ENCODE measurements at regions of chr4 and their contacts with region 1.

Region 1: GRCh38 chr4:169612871-169613859 is 782 bp upstream of the NEK1 start:
- DNase-seq: peak; percentile 84
- H3K4me3 Mint-ChIP-seq: peak overlapping the region; percentile 86
- H3K27ac Mint-ChIP-seq: peak overlapping the region; percentile 94
- H3K4me1 Mint-ChIP-seq: peaks cover 53% of the 10 kb centered on the region
- H3K27me3 Mint-ChIP-seq: no peaks in the 10 kb centered on the region

Region 2: GRCh38 chr4:169010125-169011023 is 602.8 kb before region 1 on chr4 and contains the start of gene CBR4:
- CTCF ChIA-PET with region 1: no interaction called
- POLR2A ChIA-PET with region 1: no interaction called
- intact Hi-C with region 1: loop called (anchors 2 kb)
- DNase-seq: peak; percentile 97
- H3K4me3 Mint-ChIP-seq: peak within 1 kb of the TSS; percentile 92
- H3K27ac Mint-ChIP-seq: peak within 1 kb of the TSS; percentile 86
- H3K4me1 Mint-ChIP-seq: peaks cover 20% of the 10 kb centered on the region
- H3K27me3 Mint-ChIP-seq: no peaks in the 10 kb centered on the region
- total RNA-seq, gene CBR4: 18.0 to 19.7 TPM

Region 3: DNA sequence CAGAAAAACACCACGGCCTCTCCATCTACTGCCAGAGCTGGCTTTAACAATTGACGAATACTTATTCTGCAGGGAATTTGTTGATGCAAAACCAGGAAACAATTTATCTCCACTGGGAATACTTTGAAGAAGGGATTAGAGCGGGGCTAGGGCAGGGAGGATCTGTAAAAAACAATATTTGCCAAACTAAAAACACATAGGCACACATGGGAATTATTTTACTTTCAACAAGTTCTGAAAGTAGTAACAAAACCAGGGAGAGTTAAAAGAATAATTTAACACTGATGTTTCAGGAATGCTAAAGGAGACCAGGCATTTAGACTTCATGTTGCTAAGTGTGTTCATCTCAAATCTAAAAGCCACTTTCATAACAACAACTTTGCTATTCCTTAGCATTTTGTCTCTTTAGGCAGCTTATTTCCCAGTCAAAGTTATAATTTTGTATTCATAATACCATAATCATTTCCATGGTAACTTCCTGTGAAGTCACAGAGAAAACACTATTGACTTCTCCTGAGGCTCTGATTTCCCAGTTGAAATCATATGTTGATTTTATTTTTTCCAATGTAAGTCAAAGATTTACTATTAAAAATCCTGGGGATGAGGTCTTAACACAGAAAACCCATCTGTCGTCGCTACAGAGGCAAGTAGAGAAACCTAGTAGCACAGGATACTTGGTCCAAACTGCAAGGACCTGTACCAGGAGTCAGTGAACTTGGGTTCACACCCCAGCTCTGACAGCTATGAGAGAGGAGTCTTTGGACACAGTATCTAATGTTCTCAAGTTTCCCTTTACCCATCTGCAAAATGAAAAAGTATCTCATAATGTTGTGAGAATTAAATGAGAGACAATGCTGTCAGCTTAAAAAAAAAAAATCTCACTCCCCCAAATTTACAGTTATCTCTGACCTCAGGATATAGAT is 411.7 kb before region 1 on chr4:
- CTCF ChIA-PET with region 1: no interaction called
- POLR2A ChIA-PET with region 1: no interaction called
- intact Hi-C with region 1: no loop called
- DNase-seq: no peak
- H3K4me3 Mint-ChIP-seq: no peak overlapping the region
- H3K27ac Mint-ChIP-seq: no peak overlapping the region
- H3K4me1 Mint-ChIP-seq: no peaks in the 10 kb centered on the region
- H3K27me3 Mint-ChIP-seq: no peaks in the 10 kb centered on the region

Region 4: DNA sequence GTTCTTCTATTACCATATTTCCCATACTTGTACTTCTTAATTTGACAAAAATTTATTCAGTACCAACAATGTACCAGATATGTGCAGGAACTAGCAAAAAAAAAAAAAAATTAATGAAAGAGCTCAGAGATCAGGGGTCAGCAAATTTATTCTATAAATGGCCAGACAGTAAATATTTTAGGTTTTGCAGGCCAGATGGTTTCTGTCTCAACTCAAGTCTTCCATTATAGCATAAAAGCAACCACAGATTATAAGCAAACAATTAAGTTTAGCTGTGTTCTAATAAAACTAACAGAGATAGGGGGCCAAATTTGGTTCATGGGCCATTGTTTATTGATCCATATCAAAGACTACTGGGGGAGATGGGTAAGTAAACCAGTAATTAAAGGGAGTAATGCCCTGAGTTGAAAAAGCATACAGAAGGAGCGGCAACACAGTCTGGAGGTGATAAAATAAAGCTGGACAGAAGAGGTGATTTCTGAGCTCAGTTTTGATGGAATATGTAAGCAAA is 20.1 kb before region 1 on chr4:
- CTCF ChIA-PET with region 1: no interaction called
- POLR2A ChIA-PET with region 1: no interaction called
- intact Hi-C with region 1: no loop called
- DNase-seq: no peak
- H3K4me3 Mint-ChIP-seq: no peak overlapping the region
- H3K27ac Mint-ChIP-seq: no peak overlapping the region
- H3K4me1 Mint-ChIP-seq: no peaks in the 10 kb centered on the region
- H3K27me3 Mint-ChIP-seq: no peaks in the 10 kb centered on the region

Region 5: DNA sequence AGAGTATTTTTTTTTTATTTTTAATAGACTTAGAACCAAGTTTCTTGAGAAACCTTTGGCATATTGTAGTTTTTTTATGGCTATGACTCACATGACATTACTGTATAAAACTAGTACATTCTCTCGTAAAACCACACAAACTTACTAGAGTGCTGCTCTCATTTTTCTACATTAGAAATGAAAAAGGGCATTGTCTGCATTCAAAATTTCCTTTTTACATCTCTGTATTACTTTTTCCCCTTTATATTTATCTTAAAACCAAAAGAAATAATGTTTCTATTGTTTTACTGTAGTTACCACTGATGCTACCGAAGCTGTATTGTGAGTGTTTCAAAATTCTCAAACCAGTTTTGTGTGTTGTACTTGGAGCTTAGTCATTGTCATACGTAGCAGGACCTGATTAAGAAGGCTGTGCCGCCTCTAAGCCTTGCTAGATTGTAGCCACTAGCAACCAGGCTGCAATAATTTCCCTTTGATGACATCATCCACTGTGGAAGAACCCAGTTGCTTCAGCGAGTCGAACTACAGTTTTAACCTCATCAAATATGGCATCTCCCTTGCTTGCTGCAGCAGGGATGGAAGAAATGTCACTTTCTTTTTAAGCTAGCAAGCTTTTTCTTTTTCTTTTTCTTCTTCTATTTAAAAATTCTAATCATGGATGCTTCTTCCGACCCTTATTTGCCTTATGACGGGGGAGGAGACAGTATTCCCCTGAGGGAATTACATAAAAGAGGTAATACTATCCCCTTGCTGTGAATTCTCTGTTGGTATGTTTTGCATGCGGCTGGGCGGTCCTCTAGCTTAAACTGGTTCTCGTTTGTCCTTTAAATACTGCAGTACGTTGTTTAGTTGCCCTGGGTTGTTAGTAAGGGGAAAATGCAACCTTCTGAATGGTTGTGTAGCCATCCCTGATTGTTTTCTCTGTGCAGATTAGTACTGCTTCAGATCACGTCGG is 46.8 kb after region 1 on chr4:
- CTCF ChIA-PET with region 1: interaction called, 18 read pairs
- POLR2A ChIA-PET with region 1: interaction called, 14 read pairs
- intact Hi-C with region 1: loop called (anchors 1 kb)
- DNase-seq: peak; percentile 80
- H3K4me3 Mint-ChIP-seq: peak overlapping the region; percentile 68
- H3K27ac Mint-ChIP-seq: peak overlapping the region; percentile 91
- H3K4me1 Mint-ChIP-seq: peaks cover 22% of the 10 kb centered on the region
- H3K27me3 Mint-ChIP-seq: no peaks in the 10 kb centered on the region

Region 6: DNA sequence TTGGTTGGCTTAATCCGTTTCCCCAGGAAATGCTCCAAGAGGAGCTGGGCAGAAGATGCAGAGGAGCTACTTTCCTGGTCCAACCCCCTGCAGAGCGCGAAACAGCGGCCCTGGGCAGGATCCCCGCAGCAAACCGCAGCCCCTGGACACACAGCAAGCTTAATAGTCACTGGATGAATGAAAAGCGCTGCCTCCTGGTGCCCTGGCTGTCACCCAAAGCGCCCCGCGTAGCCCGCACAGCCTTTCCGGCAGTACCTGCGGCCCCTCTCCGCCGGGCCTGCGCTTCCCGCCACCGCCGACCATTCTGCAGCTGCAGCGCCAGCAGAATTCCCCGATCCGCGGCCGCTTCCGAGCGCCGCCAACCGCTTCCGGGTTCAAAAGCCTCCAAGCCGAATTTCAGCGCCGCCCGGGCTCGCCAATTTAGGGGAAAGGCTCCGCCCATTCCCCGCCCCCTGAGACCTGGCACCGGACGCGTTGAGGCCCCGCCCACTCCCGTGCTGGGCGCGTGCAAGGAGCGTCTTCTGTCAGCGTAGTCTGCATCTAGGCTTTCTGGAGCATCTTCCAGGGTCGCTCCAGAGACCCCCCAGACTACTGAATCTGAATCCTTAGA is 144.5 kb after region 1 on chr4 and contains the start of gene HPF1:
- CTCF ChIA-PET with region 1: interaction called, 8 read pairs
- POLR2A ChIA-PET with region 1: interaction called, 3 read pairs
- intact Hi-C with region 1: loop called (anchors 1 kb)
- DNase-seq: peak; percentile 97
- H3K4me3 Mint-ChIP-seq: peak within 1 kb of the TSS; percentile 83
- H3K27ac Mint-ChIP-seq: peak within 1 kb of the TSS; percentile 70
- H3K4me1 Mint-ChIP-seq: peaks cover 24% of the 10 kb centered on the region
- H3K27me3 Mint-ChIP-seq: no peaks in the 10 kb centered on the region
- total RNA-seq, gene HPF1: 36.6 to 41.1 TPM

Region 7: DNA sequence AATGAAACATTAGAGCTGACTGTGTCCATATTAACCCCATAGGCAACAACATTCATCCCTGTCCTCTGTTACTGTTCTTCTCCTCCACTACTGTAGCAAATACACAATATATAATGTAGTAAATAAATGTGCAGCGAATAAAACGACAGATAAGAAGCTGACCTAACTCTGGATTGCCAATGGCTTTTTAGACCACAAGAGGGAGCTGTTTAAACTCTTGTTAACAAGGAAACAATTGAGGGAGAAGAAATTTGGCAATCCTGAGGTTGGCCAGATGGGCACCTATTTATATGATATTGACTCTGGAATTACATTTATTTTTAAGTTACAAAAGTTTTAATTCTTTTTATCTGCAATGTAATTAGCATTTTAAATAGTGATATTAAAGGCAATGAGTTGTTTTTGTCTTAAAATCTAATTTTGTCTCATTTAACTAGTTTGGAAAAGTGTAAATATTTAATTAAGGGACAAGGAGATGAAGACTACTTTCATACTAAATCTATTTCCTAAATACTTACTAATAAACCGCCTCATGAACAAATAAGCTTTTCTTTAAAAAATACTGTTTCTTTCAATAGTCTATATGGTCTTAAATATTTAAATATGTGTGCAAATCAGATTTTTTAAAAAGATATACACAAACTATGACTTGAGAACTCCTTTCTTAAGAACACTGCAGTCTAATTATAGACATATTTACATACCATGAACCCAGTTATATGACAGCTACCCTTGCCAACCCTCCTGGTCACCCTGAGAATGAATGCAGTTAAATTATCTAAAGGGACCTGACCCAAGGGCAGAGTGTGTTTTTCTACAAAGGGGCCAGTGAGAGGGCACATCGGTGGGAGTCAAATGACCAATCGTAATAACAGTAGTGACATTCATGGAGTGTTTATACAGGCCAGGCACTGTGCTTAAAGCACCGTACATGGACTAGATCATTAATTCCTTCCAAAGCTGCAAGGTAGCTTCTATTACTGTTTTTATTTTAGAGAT is 197.5 kb after region 1 on chr4:
- CTCF ChIA-PET with region 1: interaction called, 21 read pairs
- POLR2A ChIA-PET with region 1: no interaction called
- intact Hi-C with region 1: loop called (anchors 1 kb)
- DNase-seq: no peak
- H3K4me3 Mint-ChIP-seq: no peak overlapping the region
- H3K27ac Mint-ChIP-seq: no peak overlapping the region
- H3K4me1 Mint-ChIP-seq: no peaks in the 10 kb centered on the region
- H3K27me3 Mint-ChIP-seq: peaks cover 10% of the 10 kb centered on the region

Region 8: GRCh38 chr4:169861593-169861992 is 248.4 kb after region 1 on chr4:
- CTCF ChIA-PET with region 1: no interaction called
- POLR2A ChIA-PET with region 1: no interaction called
- intact Hi-C with region 1: no loop called
- DNase-seq: no peak
- H3K4me3 Mint-ChIP-seq: no peak overlapping the region
- H3K27ac Mint-ChIP-seq: no peak overlapping the region
- H3K4me1 Mint-ChIP-seq: no peaks in the 10 kb centered on the region
- H3K27me3 Mint-ChIP-seq: peaks cover under 1% of the 10 kb centered on the region

Region 9: DNA sequence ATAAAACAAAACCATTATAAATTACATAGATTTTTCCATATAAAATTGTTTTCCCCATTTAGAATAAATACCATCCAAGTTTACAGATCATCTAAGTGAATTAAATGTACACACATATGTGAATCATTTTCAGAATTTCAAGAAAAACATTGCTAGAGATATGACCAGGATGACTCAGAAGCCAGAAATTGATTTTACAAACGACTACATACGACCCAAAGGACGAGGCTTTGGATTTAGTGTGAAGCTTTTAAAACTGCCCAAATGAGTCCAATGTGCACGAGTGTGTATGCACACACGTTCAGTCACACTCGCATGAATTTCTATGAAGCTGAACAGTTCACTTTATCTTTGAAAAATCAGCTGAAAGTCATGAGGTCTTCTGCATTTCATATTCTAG is 375.1 kb after region 1 on chr4:
- CTCF ChIA-PET with region 1: no interaction called
- POLR2A ChIA-PET with region 1: no interaction called
- intact Hi-C with region 1: loop called (anchors 5 kb)
- DNase-seq: no peak
- H3K4me3 Mint-ChIP-seq: no peak overlapping the region
- H3K27ac Mint-ChIP-seq: no peak overlapping the region
- H3K4me1 Mint-ChIP-seq: peaks cover 14% of the 10 kb centered on the region
- H3K27me3 Mint-ChIP-seq: peaks cover 2% of the 10 kb centered on the region

Region 10: DNA sequence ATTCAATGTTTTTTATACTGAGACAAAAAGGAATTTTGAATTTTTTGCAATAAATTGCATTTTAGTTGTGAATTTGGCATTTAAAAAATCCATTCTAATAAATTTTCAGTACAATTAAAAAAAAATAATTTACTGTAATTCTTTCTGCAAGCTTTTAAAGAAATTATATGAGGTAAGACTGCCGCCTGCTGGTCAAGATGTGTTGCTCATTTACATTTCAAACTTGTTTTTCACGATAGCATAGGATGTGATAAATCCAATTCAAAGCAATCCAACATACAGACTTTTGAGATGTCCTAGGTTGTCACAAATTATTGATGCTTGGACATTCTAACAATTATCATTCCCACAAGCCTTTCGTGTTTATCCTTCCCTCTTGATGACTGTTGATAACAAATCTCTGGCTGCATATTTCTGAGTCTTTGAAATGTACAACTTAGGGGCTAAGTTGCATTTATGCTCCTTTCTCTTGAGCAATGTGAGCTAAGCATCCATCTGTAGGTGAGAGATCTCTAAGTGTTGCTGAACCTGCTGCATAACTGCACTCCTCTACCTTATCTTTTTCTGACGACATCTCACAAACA is 434.7 kb after region 1 on chr4:
- CTCF ChIA-PET with region 1: interaction called, 4 read pairs
- POLR2A ChIA-PET with region 1: no interaction called
- intact Hi-C with region 1: loop called (anchors 1 kb)
- DNase-seq: peak; percentile 57
- H3K4me3 Mint-ChIP-seq: no peak overlapping the region
- H3K27ac Mint-ChIP-seq: no peak overlapping the region
- H3K4me1 Mint-ChIP-seq: no peaks in the 10 kb centered on the region
- H3K27me3 Mint-ChIP-seq: peaks cover 2% of the 10 kb centered on the region